Activated T-helper 2 cell treated with anti-CD3 and anti-CD28 coated beads, Interferon-gamma antibody, Interleukin-2, Interleukin-4, amounts not matched to agents 10 μg/mL and 5 μg/mL and 100 μg/mL, durations not matched to agents 14 hours and 24 hours and 36 hours (primary cell): ENCODE measurements at regions of chr1 and their contacts with region 1.

Region 1: GRCh38 chr1:19762175-19762779 is 37.4 kb downstream of the TMCO4 start:
- DNase-seq: no peak
- H3K4me3 Mint-ChIP-seq: no peak overlapping the region
- H3K27ac Mint-ChIP-seq: no peak overlapping the region
- H3K4me1 Mint-ChIP-seq: peaks cover 17% of the 10 kb centered on the region
- H3K27me3 Mint-ChIP-seq: no peaks in the 10 kb centered on the region

Region 2: DNA sequence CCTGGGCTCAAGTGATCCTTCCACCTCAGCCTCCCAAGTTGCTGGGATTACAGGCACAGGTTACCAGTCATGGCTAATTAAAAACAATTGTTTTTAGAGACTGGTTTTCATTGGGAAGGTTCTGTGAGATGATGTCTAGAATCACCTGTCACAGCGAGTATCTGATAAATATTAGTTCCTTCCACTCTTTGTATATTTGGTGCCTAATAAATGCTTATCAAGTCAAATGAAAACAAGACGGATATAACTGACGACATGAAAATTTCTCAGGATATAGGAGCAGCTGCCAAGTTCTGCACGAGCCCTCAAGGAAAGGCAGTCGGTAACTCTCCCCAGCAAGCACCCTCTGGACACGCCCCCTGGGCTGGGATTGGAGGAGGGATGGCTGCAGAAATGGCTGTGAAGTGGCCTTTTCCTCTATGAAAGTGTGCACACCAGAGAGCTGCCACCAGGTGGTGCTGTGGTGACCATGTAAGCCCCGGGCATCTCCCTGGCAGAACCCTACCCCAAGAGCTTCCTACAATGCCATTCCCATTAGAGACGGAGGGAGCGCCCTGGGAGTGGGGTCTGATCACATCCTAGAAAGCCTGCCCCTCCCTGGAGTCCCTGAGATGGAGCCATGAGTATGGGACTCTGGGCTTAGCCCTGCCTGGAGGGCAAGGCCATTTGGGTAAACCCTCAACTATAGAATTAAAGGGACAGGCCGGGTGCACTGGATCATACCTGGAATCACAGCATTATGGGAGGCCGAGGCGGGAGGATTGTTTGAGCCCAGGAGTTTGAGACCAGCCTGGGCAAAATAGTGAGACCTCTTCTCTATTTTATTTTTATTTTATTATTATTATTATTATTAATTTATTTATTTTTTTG is 46.7 kb before region 1 on chr1:
- intact Hi-C with region 1: loop called (anchors 2 kb)
- DNase-seq: peak; percentile 80
- H3K4me3 Mint-ChIP-seq: no peak overlapping the region
- H3K27ac Mint-ChIP-seq: no peak overlapping the region
- H3K4me1 Mint-ChIP-seq: peaks cover 17% of the 10 kb centered on the region
- H3K27me3 Mint-ChIP-seq: no peaks in the 10 kb centered on the region

Region 3: DNA sequence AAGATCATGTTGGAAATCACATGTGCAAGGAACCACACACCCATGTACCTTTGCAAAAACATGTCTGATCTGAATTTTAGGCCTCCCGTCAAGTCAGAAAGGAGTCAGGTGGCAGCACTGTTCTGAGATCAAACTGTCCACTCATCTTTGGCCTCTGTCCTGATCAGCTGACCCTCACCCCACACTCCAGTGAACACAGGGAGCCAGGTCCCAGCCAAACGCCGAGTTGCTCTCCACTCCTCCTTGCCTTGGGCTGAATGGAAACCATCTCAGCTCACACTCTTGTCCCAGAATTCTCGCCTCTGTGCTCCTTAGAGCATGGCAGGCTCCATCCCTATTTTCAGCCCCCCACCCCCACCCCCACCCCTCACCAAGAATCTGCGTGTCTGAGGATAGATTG is 57.4 kb after region 1 on chr1:
- intact Hi-C with region 1: no loop called
- DNase-seq: no peak
- H3K4me3 Mint-ChIP-seq: no peak overlapping the region
- H3K27ac Mint-ChIP-seq: no peak overlapping the region
- H3K4me1 Mint-ChIP-seq: peaks cover 4% of the 10 kb centered on the region
- H3K27me3 Mint-ChIP-seq: peaks cover 6% of the 10 kb centered on the region